MCF 10A (cell line): ENCODE measurements at regions of chr19 and their contacts with region 1.

Region 1: DNA sequence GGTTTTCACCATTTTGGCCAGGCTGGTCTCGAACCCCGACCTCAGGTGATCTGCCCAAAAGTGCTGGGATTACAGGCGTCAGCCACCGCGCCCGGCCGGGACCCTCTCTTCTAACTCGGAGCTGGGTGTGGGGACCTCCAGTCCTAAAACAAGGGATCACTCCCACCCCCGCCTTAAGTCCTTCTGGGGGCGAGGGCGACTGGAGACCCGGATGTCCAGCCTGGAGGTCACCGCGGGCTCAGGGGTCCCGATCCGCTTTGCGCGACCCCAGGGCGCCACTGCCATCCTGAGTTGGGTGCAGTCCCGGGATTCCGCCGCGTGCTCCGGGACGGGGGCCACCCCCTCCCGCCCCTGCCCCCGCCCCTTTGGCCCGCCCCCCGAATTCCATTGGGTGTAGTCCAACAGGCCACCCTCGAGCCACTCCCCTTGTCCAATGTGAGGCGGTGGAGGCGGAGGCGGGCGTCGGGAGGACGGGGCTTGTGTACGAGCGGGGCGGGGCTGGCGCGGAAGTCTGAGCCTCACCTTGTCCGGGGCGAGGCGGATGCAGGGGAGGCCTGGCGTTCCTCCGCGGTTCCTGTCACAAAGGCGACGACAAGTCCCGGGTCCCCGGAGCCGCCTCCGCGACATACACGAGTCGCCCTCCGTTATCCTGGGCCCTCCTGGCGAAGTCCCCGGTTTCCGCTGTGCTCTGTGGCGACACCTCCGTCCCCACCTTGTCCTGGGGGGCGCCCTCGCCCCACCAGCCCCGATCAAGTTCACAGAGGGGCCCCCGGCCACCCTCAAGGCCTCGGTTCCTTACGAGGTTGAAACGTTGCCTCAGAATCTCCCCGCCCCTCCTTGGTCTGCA is 1.0 kb downstream of the LDLR start:
- DNase-seq: peak; percentile 98
- H3K4me3 Mint-ChIP-seq: peak overlapping the region; percentile 92
- H3K27ac Mint-ChIP-seq: peak overlapping the region; percentile 99
- H3K4me1 Mint-ChIP-seq: peaks cover 9% of the 10 kb centered on the region
- H3K27me3 Mint-ChIP-seq: no peaks in the 10 kb centered on the region
- CTCF ChIP-seq: no peak

Region 2: DNA sequence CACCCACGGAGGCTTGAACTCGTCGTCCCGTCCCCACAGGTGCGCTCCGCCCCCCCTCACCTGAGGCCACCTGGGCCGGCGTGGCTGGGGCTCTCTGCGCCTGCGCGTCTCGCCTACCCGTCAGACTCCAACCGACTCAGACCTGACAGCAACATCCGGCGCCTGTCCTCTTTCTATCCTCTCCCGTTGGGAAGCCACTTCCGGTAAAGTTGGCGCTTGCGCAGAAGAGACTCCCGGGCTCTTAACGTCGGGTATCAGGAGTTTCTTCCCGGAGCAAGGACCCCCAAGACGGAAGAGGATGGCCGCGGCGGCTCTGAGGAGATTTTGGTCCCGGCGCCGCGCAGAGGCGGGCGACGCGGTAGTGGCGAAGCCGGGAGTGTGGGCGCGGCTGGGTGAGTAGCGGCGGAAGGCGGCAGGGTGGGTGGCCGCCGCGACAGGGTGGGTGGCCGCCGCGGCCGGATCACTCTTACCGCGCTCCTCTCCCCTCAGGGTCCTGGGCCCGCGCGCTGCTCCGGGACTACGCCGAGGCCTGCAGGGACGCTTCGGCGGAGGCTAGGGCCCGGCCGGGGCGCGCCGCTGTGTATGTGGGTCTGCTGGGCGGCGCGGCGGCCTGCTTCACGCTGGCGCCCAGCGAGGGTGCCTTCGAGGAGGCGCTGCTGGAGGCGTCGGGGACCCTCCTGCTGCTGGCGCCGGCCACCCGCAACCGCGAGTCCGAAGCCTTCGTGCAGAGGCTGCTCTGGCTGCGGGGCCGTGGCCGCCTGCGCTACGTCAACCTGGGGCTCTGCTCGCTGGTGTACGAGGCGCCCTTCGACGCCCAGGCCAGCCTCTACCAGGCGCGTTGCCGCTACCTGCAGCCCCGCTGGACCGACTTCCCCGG is 161.5 kb before region 1 on chr19 and contains the starts of genes TIMM29 and YIPF2:
- CTCF ChIA-PET with region 1: interaction called, 3 read pairs
- POLR2A ChIA-PET with region 1: interaction called, 20 read pairs
- intact Hi-C with region 1: no loop called
- DNase-seq: peak; percentile 100
- H3K4me3 Mint-ChIP-seq: peak within 1 kb of the TSS; percentile 95
- H3K27ac Mint-ChIP-seq: peak within 1 kb of the TSS; percentile 85
- H3K4me1 Mint-ChIP-seq: no peaks in the 10 kb centered on the region
- H3K27me3 Mint-ChIP-seq: no peaks in the 10 kb centered on the region
- CTCF ChIP-seq: no peak
- total RNA-seq, gene TIMM29: 18.3 and 19.3 TPM in 2 replicates
- total RNA-seq, gene YIPF2: 65.5 and 75.3 TPM in 2 replicates

Region 3: DNA sequence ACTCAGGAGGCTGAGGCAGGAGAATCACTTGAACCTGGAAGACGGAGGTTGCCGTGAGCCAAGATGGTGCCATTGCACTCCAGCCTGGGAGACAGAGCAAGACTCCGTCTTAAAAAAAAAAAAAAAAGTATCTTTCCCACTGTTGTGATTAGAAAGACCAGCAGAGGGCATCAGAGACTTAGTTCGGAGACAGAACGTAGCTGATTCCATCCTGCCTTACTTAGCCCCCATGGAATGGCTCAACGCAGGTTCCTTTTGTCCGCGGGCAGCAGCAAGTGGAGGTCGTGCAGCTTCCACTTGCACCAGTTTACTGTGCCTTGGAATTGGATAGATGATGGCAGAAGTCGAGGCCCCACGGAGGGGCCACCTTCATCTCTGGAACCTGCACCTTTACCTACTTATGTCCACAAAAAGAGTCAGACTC is 153.6 kb before region 1 on chr19:
- CTCF ChIA-PET with region 1: interaction called, 3 read pairs
- POLR2A ChIA-PET with region 1: interaction called, 12 read pairs
- intact Hi-C with region 1: loop called (anchors 5 kb)
- DNase-seq: peak; percentile 84
- H3K4me3 Mint-ChIP-seq: no peak overlapping the region
- H3K27ac Mint-ChIP-seq: no peak overlapping the region
- H3K4me1 Mint-ChIP-seq: no peaks in the 10 kb centered on the region
- H3K27me3 Mint-ChIP-seq: no peaks in the 10 kb centered on the region
- CTCF ChIP-seq: peak; percentile 55

Region 4: GRCh38 chr19:10960314-10961072 is 129.8 kb before region 1 on chr19 and contains the start of gene SMARCA4:
- CTCF ChIA-PET with region 1: no interaction called
- POLR2A ChIA-PET with region 1: interaction called, 19 read pairs
- intact Hi-C with region 1: no loop called
- DNase-seq: peak; percentile 96
- H3K4me3 Mint-ChIP-seq: peak within 1 kb of the TSS; percentile 86
- H3K27ac Mint-ChIP-seq: peak within 1 kb of the TSS; percentile 92
- H3K4me1 Mint-ChIP-seq: no peaks in the 10 kb centered on the region
- H3K27me3 Mint-ChIP-seq: no peaks in the 10 kb centered on the region
- CTCF ChIP-seq: no peak
- total RNA-seq, gene SMARCA4: 127 and 132 TPM in 2 replicates

Region 5: GRCh38 chr19:11108746-11109145 is 18.5 kb after region 1 on chr19:
- CTCF ChIA-PET with region 1: no interaction called
- POLR2A ChIA-PET with region 1: interaction called, 11 read pairs
- intact Hi-C with region 1: no loop called
- DNase-seq: no peak
- H3K4me3 Mint-ChIP-seq: no peak overlapping the region
- H3K27ac Mint-ChIP-seq: no peak overlapping the region
- H3K4me1 Mint-ChIP-seq: no peaks in the 10 kb centered on the region
- H3K27me3 Mint-ChIP-seq: no peaks in the 10 kb centered on the region
- CTCF ChIP-seq: no peak

Region 6: DNA sequence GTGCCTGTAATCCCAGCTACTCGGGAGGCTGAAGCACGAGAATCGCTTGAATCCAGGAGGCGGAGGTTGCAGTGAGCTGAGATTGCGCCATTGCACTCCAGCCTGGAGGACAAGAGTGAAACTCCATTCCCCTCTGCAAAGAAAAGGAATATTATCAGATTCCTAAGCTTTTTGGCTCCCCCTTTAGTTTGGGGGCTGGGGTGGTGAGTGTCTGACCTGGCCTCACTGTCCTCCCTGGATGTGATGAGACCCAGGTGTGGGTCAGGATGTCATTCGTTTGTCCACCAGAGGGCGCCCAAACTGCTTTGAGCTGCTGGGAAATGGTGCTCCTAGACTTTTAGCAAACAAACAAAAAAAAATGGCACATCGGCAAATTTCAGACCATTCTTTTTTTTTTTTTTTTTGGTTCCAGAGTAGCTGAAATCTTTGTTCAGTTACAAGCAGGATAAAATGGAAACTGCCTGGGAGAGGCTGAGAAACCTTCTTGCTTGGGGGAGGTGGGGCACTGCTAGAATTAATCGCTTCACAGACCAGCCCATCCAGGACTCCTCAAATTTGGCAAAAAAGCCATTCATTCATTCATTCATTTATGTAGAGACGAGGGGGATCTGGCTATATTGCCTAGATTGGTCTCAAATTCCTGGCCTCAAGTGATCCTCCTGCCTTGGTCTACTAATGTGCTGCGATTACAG is 35.9 kb after region 1 on chr19:
- CTCF ChIA-PET with region 1: interaction called, 5 read pairs
- POLR2A ChIA-PET with region 1: interaction called, 10 read pairs
- intact Hi-C with region 1: loop called (anchors 1 kb)
- DNase-seq: peak; percentile 88
- H3K4me3 Mint-ChIP-seq: no peak overlapping the region
- H3K27ac Mint-ChIP-seq: no peak overlapping the region
- H3K4me1 Mint-ChIP-seq: no peaks in the 10 kb centered on the region
- H3K27me3 Mint-ChIP-seq: no peaks in the 10 kb centered on the region
- CTCF ChIP-seq: peak; percentile 71